Ascending aorta (tissue), 2 donors: ENCODE measurements at regions of chr9 and their contacts with region 1.

Region 1: GRCh38 chr9:76905791-76906650 is at the start of gene PRUNE2:
- DNase-seq: peak; percentile 72 to 95
- H3K4me3 ChIP-seq: peak within 1 kb of the TSS; percentile 70 to 87
- H3K27ac ChIP-seq: peak within 1 kb of the TSS; percentile 85 to 90
- H3K4me1 ChIP-seq: no peaks in the 10 kb centered on the region
- H3K27me3 ChIP-seq: no peaks in the 10 kb centered on the region
- CTCF ChIP-seq: peak in 1 of 3 experiments; percentile 6
- total RNA-seq, gene PRUNE2: 200 TPM

Region 2: DNA sequence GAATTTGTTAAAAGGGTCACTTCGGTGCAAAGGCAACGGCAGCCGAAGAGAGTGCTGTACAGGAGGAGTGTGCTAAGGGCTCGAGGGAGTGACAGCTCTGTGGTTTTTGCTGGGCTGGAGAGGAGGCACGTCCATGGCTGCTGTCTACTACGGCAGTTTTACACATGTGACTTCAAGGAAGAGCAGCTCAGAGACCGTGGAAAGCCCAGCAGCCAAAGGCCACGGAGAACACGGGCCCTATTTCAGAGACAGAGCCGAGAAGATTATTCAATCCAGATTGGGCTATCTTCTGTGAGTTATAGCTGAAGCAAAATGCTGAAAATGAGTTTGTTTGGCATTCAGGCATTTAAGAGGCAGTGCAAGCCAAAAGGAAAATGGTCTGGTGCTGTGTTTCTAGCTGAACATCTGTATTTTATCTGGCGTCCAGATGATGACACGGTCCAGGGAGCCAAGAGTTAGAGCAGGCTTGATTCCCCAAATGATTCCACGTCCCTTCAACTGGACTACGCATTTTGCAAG is 608.2 kb before region 1 on chr9:
- intact Hi-C with region 1: no loop called
- DNase-seq: no peak
- H3K4me3 ChIP-seq: peak overlapping the region in 1 of 2 donors; percentile 40
- H3K27ac ChIP-seq: no peak overlapping the region
- H3K4me1 ChIP-seq: peaks cover 2 to 3% of the 10 kb centered on the region in 2 donors
- H3K27me3 ChIP-seq: no peaks in the 10 kb centered on the region
- CTCF ChIP-seq: no peak

Region 3: DNA sequence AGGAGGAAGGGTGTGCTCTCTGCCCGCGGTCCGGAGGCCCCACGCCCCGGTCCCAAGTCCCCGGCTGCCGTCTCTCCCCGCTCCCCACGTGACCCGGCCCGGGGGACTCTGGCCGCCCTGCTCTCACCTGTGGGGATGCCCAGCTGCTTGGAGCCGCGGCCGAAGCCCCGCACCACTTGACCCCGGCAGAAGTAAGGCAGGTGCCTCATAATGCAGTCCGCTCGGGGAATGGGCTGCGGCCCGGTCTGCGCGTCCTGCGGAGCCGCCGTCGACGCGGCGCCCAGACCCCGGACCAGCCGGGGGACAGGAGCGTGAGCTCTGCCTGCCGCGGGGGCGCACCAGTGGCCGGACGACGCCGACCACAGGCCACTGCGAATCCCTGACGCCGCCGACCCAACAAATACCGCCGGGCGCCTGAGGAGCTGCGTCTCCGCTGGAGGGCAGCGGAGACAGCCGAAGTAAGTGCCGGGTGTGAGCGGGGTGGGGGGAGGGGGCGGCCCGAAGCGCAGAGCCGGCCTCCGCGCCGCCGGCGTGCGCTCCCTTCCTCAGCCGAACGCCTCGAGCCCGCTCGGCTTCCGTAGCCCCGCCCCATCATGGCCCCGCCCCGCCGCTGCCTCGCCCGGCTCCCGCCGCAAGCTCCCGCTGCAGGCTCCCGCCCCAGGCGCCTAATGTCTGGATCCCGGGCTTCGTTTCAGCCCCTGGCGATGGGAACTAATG is 511.9 kb before region 1 on chr9 and contains the start of gene RFK:
- intact Hi-C with region 1: loop called (anchors 10 kb)
- DNase-seq: peak; percentile 49 to 96
- H3K4me3 ChIP-seq: peak within 1 kb of the TSS; percentile 95 to 97
- H3K27ac ChIP-seq: peak within 1 kb of the TSS; percentile 94 to 97
- H3K4me1 ChIP-seq: peaks cover 0 to 11% of the 10 kb centered on the region in 2 donors
- H3K27me3 ChIP-seq: no peaks in the 10 kb centered on the region
- CTCF ChIP-seq: peak; percentile 48 to 53 (median 52)
- total RNA-seq, gene RFK: 8.9 TPM

Region 4: GRCh38 chr9:76717613-76718012 is 188.4 kb before region 1 on chr9:
- intact Hi-C with region 1: loop called (anchors 5 kb)
- DNase-seq: peak in 1 of 2 donors; percentile 78
- H3K4me3 ChIP-seq: no peak overlapping the region
- H3K27ac ChIP-seq: peak overlapping the region; percentile 49 to 67
- H3K4me1 ChIP-seq: peaks cover 0 to 10% of the 10 kb centered on the region in 2 donors
- H3K27me3 ChIP-seq: no peaks in the 10 kb centered on the region
- CTCF ChIP-seq: no peak

Region 5: GRCh38 chr9:76798527-76798926 is 107.5 kb before region 1 on chr9:
- intact Hi-C with region 1: no loop called
- DNase-seq: no peak
- H3K4me3 ChIP-seq: no peak overlapping the region
- H3K27ac ChIP-seq: no peak overlapping the region
- H3K4me1 ChIP-seq: no peaks in the 10 kb centered on the region
- H3K27me3 ChIP-seq: no peaks in the 10 kb centered on the region
- CTCF ChIP-seq: no peak

Region 6: GRCh38 chr9:76818271-76818670 is 87.8 kb before region 1 on chr9:
- intact Hi-C with region 1: loop called (anchors 1 kb)
- DNase-seq: peak; percentile 82 to 96
- H3K4me3 ChIP-seq: no peak overlapping the region
- H3K27ac ChIP-seq: peak overlapping the region; percentile 84 to 90
- H3K4me1 ChIP-seq: peaks cover 3 to 24% of the 10 kb centered on the region in 2 donors
- H3K27me3 ChIP-seq: no peaks in the 10 kb centered on the region
- CTCF ChIP-seq: no peak

Region 7: DNA sequence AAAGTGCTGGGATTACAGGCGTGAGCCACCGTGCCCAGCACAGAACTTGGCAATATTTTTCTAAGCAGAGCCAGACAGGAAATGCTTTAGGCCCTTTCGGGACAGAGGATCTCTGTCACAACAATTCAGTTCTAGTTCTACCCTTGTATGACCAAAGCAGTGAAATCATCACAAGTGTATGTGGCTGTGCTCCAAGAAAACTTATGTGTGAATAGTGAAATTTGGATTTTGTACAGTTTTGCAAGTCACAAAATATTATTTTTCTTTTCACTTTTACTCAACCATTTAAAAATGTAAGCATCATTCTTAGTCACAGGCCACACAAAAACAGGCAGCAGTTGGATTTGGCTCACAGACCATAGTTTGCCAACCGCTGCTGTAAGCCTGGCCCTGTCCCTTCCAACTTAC is 20.3 kb after region 1 on chr9:
- intact Hi-C with region 1: loop called (anchors 1 kb)
- DNase-seq: peak; percentile 23 to 86
- H3K4me3 ChIP-seq: no peak overlapping the region
- H3K27ac ChIP-seq: peak overlapping the region; percentile 88 to 91
- H3K4me1 ChIP-seq: peaks cover 5 to 6% of the 10 kb centered on the region in 2 donors
- H3K27me3 ChIP-seq: no peaks in the 10 kb centered on the region
- CTCF ChIP-seq: no peak

Region 8: GRCh38 chr9:77392328-77392727 is 486.3 kb after region 1 on chr9:
- intact Hi-C with region 1: no loop called
- DNase-seq: no peak
- H3K4me3 ChIP-seq: no peak overlapping the region
- H3K27ac ChIP-seq: no peak overlapping the region
- H3K4me1 ChIP-seq: no peaks in the 10 kb centered on the region
- H3K27me3 ChIP-seq: no peaks in the 10 kb centered on the region
- CTCF ChIP-seq: no peak